ENCODE measurements at regions of chr12 and their contacts with region 1.

Region 1: GRCh38 chr12:81759215-81760051 is at the start of gene PPFIA2:
- DNase-seq: peak; percentile 24 to 77
- H3K4me3 ChIP-seq: peak within 1 kb of the TSS; percentile 61 to 80
- H3K27ac ChIP-seq: peak within 1 kb of the TSS; percentile 63 to 73
- H3K4me1 ChIP-seq: peaks cover 0 to 27% (median 0%) of the 10 kb centered on the region in 4 donors
- H3K27me3 ChIP-seq: no peaks in the 10 kb centered on the region
- CTCF ChIP-seq: no peak

Region 2: GRCh38 chr12:81819991-81820633 is 60.7 kb after region 1 on chr12:
- intact Hi-C with region 1: loop called (anchors 2 kb)
- DNase-seq: no peak
- H3K4me3 ChIP-seq: no peak overlapping the region
- H3K27ac ChIP-seq: peak overlapping the region; percentile 41 to 58
- H3K4me1 ChIP-seq: peaks cover 0 to 17% (median 0%) of the 10 kb centered on the region in 4 donors
- H3K27me3 ChIP-seq: no peaks in the 10 kb centered on the region
- CTCF ChIP-seq: no peak